Ovary (tissue), 10 donors: ENCODE measurements at regions of chr20 and their contacts with region 1.

Region 1: DNA sequence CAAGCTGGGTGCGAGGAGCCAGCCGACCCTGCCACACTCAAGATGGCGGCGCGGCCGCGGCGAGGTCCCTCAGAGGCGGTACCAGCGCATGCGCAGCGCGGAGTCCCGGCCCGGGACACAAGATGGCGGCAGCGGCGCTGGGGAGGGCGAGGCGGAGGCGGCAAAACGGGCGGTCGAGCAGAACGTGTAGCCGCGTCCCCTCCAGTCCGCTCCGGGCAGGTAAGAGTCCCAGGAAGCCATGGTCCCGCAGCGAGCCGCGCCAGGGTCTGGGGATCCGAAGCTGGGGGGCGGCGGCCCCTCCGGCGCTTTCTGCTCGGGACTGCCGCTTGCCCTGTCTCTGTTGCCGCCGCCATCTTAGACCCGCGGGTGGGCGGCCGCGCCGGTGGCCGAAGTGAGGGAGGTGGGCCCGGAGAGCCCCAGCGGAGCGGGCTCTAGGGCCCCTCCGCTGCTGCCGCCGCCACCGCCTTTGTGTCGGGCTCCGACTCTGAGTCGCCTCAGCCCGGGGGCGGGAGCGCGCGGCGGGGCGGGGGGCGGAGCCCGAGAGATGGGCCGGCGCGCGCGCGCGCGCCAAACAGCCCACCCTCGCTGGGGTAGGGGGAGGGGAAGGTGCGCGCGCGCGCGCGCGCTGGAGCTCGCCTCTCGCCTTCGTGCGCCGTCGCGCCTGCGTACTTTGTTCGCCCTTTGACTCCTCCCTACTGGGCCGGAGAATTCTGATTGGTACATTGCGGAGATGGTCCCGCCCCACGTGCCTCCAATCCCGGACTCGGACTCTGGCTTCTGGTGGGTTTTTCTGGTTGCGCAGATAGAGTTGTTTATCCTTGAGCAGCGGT is at the start of gene PCIF1:
- DNase-seq: peak; percentile 99 to 100 (median 99)
- H3K4me3 ChIP-seq: peak within 1 kb of the TSS; percentile 67
- H3K27ac ChIP-seq: peak within 1 kb of the TSS; percentile 99 to 100
- H3K4me1 ChIP-seq: peaks cover 2% of the 10 kb centered on the region
- H3K27me3 ChIP-seq: no peaks in the 10 kb centered on the region
- CTCF ChIP-seq: peak in 2 of 3 donors; percentile 50 to 55
- EP300 ChIP-seq: no peak
- POLR2A ChIP-seq: peak; percentile 97
- total RNA-seq, gene PCIF1: 34.5 to 73.7 (median 59.8) TPM

Region 2: GRCh38 chr20:45835825-45836224 is 99.0 kb before region 1 on chr20:
- intact Hi-C with region 1: loop called in 1 of 4 experiments (anchors 1 kb)
- DNase-seq: peak in 1 of 5 donors; percentile 63
- H3K4me3 ChIP-seq: peak overlapping the region; percentile 66
- H3K27ac ChIP-seq: peak overlapping the region in 1 of 2 donors; percentile 97
- H3K4me1 ChIP-seq: peaks cover 22% of the 10 kb centered on the region
- H3K27me3 ChIP-seq: no peaks in the 10 kb centered on the region
- CTCF ChIP-seq: no peak
- EP300 ChIP-seq: no peak
- POLR2A ChIP-seq: no peak

Region 3: GRCh38 chr20:45971675-45972499 is 37.1 kb after region 1 on chr20 and contains the start of gene ZNF335:
- intact Hi-C with region 1: loop called in 1 of 4 experiments (anchors 2 kb)
- DNase-seq: peak; percentile 95 to 98 (median 96)
- H3K4me3 ChIP-seq: peak within 1 kb of the TSS; percentile 70
- H3K27ac ChIP-seq: peak within 1 kb of the TSS; percentile 98 to 100
- H3K4me1 ChIP-seq: peaks cover 4% of the 10 kb centered on the region
- H3K27me3 ChIP-seq: no peaks in the 10 kb centered on the region
- CTCF ChIP-seq: peak; percentile 31 to 86 (median 82)
- EP300 ChIP-seq: peak; percentile 69
- POLR2A ChIP-seq: peak; percentile 64
- total RNA-seq, gene ZNF335: 14.2 to 25.7 (median 20.0) TPM

Region 4: DNA sequence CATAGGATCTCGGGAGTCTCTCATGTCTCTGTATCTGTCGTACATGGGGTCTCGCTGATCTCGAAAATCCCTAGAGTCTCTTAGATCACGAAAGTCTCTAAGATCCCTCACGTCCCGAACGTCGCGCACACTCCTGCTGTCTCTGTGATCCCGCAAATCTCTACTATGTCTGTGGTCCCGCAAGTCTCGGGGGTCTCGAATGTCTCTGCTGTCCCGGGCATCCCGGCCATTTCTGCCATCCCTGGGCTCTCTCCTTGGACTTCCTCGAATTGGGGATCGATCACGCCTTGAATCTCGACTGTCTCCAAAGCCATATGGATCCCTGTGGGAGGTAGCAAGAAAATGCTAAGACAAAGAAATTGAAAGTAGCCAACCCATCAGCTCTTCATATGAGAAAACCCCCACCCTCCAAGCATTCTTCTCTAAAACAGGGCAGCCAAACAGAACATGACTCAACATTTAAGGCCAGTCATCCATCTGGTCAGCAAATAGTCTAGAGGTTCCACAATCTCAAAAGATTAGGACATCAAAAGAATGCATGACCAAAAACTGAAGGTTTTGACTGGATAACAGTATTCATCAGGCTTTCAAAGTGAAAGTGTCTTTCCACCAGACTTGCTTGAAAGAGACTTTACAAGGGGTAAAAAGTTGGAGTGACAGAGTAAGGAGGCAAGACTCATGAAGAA is 135.6 kb after region 1 on chr20:
- intact Hi-C with region 1: no loop called
- DNase-seq: no peak
- H3K4me3 ChIP-seq: no peak overlapping the region
- H3K27ac ChIP-seq: no peak overlapping the region
- H3K4me1 ChIP-seq: peaks cover 3% of the 10 kb centered on the region
- H3K27me3 ChIP-seq: no peaks in the 10 kb centered on the region
- CTCF ChIP-seq: no peak
- EP300 ChIP-seq: no peak
- POLR2A ChIP-seq: no peak

Region 5: GRCh38 chr20:46151936-46152335 is 217.1 kb after region 1 on chr20:
- intact Hi-C with region 1: no loop called
- DNase-seq: no peak
- H3K4me3 ChIP-seq: no peak overlapping the region
- H3K27ac ChIP-seq: no peak overlapping the region
- H3K4me1 ChIP-seq: no peaks in the 10 kb centered on the region
- H3K27me3 ChIP-seq: no peaks in the 10 kb centered on the region
- CTCF ChIP-seq: no peak
- EP300 ChIP-seq: no peak
- POLR2A ChIP-seq: no peak

Region 6: GRCh38 chr20:46552460-46553420 is 617.9 kb after region 1 on chr20:
- intact Hi-C with region 1: no loop called
- DNase-seq: no peak
- H3K4me3 ChIP-seq: no peak overlapping the region
- H3K27ac ChIP-seq: no peak overlapping the region
- H3K4me1 ChIP-seq: no peaks in the 10 kb centered on the region
- H3K27me3 ChIP-seq: no peaks in the 10 kb centered on the region
- CTCF ChIP-seq: no peak
- EP300 ChIP-seq: no peak
- POLR2A ChIP-seq: no peak